Activated naive CD4-positive, alpha-beta T cell treated with anti-CD3 and anti-CD28 coated beads for 36 hours (primary cell): ENCODE measurements at regions of chr5 and their contacts with region 1.

Region 1: DNA sequence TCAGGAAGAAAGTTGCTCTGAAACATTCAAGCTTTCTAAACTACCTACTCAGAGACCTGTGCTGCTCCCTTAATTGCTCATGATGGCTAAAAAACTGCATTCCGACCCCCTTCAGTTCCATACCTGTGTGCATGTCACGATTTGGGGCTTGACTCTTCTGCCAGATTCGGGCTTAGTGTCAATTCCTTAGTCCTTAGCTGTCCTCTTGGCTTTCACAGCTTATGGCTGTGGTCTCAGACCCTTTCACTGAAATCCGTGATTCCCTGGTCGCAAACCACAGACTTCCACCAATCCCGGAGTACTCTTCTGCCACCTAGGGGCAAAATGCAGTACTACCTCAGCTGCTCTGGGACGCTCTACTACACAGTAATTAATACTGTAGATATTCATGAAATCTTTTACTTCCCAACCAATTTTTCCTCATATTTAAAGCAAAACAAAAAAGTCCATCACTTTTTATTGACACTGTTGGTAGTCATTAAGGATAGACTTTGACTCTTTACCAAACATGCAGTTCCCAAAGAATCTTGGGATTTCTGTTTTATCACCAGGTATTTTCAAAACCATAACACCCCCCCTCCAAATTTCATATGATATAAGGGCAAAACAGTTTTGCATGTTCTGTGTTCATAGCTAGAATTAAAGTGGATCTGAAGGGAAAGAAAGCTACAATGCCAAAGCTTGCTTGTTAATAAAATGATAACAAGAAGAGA is 617.4 kb downstream of the SLCO4C1 start:
- DNase-seq: peak; percentile 51
- H3K4me3 Mint-ChIP-seq: no peak overlapping the region
- H3K27ac Mint-ChIP-seq: no peak overlapping the region
- H3K4me1 Mint-ChIP-seq: no peaks in the 10 kb centered on the region
- H3K27me3 Mint-ChIP-seq: peaks cover 2% of the 10 kb centered on the region

Region 2: DNA sequence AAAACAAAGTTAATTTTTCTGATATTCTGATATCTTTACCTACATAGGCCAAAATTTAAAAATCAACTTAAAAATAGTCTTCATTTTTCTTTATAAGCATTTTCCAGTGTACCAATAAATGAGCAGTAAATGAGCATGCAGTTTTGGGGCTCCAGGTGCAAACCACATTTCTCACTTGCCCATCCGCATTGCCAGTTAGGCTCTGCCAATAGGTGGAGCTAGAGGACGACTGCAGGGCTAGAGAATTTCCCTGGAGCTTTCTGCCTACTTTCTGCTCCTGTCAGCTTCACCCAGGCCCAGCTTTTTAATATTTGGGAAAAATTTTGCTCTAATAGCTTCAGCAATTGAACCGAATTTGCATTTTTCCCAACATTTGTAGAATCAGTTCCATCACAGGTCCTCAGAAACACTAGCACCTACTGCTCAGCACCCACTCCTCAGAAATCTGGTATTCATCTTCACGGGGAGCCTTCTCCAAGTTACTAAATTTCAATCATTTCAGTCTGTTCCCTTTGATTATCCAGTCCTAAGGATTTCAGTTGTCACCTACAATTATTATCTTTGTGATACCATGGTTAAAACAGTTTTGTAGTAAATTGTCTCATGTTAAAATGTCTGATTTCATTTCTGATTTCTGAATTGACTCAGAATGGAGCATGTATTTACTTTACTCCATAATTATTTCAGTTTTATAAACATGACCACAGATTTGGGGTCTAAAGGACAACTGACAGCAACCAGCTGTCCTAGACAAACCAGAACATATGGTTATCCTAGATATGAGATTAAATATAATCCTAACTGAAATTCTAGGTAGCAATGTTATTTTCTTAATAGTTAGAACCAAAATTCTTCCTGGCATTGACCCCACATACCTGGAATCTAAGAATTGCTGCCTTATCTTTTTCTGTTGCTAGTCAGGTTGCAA is 1248.1 kb before region 1 on chr5:
- CTCF ChIA-PET with region 1: no interaction called
- intact Hi-C with region 1: loop called (anchors 2 kb)
- DNase-seq: peak; percentile 65
- H3K4me3 Mint-ChIP-seq: no peak overlapping the region
- H3K27ac Mint-ChIP-seq: no peak overlapping the region
- H3K4me1 Mint-ChIP-seq: no peaks in the 10 kb centered on the region
- H3K27me3 Mint-ChIP-seq: no peaks in the 10 kb centered on the region

Region 3: GRCh38 chr5:100479079-100479688 is 1199.5 kb before region 1 on chr5:
- CTCF ChIA-PET with region 1: no interaction called
- intact Hi-C with region 1: loop called (anchors 2 kb)
- DNase-seq: peak; percentile 4
- H3K4me3 Mint-ChIP-seq: no peak overlapping the region
- H3K27ac Mint-ChIP-seq: no peak overlapping the region
- H3K4me1 Mint-ChIP-seq: no peaks in the 10 kb centered on the region
- H3K27me3 Mint-ChIP-seq: no peaks in the 10 kb centered on the region

Region 4: GRCh38 chr5:100623719-100624118 is 1054.9 kb before region 1 on chr5:
- CTCF ChIA-PET with region 1: no interaction called
- intact Hi-C with region 1: loop called (anchors 2 kb)
- DNase-seq: no peak
- H3K4me3 Mint-ChIP-seq: no peak overlapping the region
- H3K27ac Mint-ChIP-seq: no peak overlapping the region
- H3K4me1 Mint-ChIP-seq: no peaks in the 10 kb centered on the region
- H3K27me3 Mint-ChIP-seq: no peaks in the 10 kb centered on the region

Region 5: DNA sequence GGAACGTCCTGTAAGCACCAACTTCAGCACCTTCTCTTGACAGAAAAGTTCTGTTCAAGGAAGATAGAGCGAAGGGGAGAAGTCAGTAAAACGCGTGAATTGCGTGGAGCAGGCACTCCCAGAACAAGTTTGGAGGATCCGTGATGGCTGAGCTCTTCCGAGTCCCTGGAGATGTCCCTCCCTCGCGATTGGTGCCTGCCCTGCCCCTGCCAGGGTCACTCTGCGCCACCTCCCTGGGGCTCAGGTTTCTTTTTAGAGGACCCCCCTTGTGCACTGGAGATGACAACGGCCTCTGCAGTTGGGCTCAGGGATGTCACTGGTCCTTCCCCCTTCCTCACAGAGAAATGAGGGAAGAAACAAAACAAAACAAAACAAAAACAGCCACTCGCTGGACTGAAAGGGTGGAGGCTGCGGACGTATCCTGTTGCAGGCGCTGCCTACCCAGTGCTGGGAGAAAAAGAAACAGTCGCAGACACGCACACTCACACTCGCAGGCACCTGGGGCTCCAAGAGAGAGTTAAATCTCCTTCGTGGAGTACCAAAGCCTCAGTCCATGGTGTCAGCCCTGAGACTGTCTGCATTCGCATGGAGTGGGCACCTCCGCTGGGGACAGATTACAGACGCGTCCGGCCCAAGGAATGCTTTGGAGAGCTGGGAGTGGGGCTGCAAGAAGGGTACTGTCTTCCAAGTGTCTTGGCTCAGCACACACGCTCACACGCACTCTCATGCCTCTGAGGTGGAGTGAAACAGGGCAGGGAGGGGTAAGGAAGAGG is 104.8 kb after region 1 on chr5:
- CTCF ChIA-PET with region 1: no interaction called
- intact Hi-C with region 1: no loop called
- DNase-seq: no peak
- H3K4me3 Mint-ChIP-seq: no peak overlapping the region
- H3K27ac Mint-ChIP-seq: no peak overlapping the region
- H3K4me1 Mint-ChIP-seq: no peaks in the 10 kb centered on the region
- H3K27me3 Mint-ChIP-seq: no peaks in the 10 kb centered on the region

Region 6: DNA sequence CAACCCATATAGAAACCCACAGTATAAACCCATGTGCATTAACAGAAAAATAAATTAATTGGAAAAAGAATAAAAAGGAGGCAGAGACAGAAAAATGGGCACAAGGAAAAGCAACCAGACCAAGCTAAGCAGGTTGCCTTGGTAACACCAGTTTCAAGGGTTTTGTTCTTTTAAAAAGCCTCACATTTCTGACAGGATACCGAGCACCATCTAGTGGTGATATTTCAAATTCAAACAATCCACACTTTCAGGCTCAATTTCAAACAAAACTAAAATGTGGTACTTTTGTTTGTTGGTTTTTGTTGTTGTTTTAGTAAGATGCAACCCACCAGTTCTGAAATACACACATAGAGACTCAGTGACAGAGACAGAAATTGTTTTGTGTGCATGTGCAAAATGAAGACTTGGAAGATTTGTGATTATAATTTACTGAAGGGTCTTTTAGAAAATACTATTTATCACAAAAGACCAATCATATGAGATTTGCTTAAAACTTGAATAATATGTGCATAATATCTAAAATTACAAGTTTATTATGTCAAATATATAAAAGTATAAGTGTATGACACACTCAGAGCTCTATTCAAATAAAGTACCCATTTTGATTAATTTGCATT is 299.2 kb after region 1 on chr5:
- CTCF ChIA-PET with region 1: interaction called, 3 read pairs
- intact Hi-C with region 1: loop called (anchors 2 kb)
- DNase-seq: no peak
- H3K4me3 Mint-ChIP-seq: no peak overlapping the region
- H3K27ac Mint-ChIP-seq: no peak overlapping the region
- H3K4me1 Mint-ChIP-seq: no peaks in the 10 kb centered on the region
- H3K27me3 Mint-ChIP-seq: no peaks in the 10 kb centered on the region